Lower leg skin (tissue), 4 donors: ENCODE measurements at regions of chr5 and their contacts with region 1.

Region 1: GRCh38 chr5:81851481-81852178 is 100.7 kb upstream of the SSBP2 start:
- DNase-seq: peak; percentile 96 to 99
- H3K4me3 ChIP-seq: peak overlapping the region; percentile 39
- CTCF ChIP-seq: no peak
- POLR2A ChIP-seq: no peak

Region 2: GRCh38 chr5:81751009-81751835 is 100.4 kb before region 1 on chr5 and contains the start of gene SSBP2:
- intact Hi-C with region 1: loop called (anchors 5 kb)
- DNase-seq: peak; percentile 99 to 100
- H3K4me3 ChIP-seq: peak within 1 kb of the TSS; percentile 74
- CTCF ChIP-seq: no peak
- POLR2A ChIP-seq: no peak
- total RNA-seq, gene SSBP2: 45.3 to 83.1 (median 61.7) TPM

Region 3: GRCh38 chr5:81787474-81788242 is 64.0 kb before region 1 on chr5:
- intact Hi-C with region 1: loop called (anchors 10 kb)
- DNase-seq: peak; percentile 85 to 92
- H3K4me3 ChIP-seq: no peak overlapping the region
- CTCF ChIP-seq: no peak
- POLR2A ChIP-seq: no peak

Region 4: GRCh38 chr5:81909677-81910076 is 58.0 kb after region 1 on chr5:
- intact Hi-C with region 1: no loop called
- DNase-seq: no peak
- H3K4me3 ChIP-seq: no peak overlapping the region
- CTCF ChIP-seq: no peak
- POLR2A ChIP-seq: no peak

Region 5: DNA sequence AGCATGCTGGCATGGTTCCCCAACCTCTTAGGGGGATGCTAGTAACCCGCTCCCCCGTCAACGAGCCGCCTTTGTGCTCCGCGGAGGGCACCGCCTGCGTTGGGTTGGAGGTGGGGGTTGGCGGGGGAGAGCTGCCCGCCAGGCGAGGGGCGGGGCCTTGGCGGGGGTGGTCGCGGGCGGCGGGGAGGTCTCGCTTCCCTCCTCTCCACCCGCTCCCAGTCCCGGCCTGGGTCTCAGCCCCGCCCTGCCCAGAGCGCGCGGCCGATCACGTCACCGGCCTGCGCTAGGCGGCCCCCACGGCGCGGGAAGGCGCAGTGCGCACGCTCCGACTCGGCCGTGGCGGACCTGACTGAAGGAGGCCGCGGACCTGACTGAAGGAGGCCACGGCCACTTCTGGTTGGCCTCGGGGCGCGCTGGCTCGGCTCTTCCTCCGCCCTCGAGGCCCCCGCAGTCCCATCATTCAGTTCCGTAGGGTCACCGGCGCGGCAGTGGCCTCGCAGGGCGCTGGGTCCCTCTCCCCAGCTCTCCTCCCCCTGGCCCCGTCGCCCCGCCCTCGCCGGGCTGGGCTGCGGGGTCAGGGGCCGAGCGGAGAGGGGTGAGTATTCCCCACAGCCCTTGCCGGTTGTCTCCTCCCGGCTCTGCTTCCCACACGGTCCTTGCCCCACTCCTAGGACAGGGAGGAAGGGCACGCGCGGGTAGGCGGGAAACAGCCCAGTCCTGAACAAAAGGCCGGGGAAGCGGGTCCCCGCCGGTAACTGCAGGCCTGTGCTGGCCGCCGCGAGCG is 120.3 kb after region 1 on chr5 and contains the start of gene ATG10:
- intact Hi-C with region 1: loop called (anchors 10 kb)
- DNase-seq: peak; percentile 81 to 97
- H3K4me3 ChIP-seq: peak within 1 kb of the TSS; percentile 72
- CTCF ChIP-seq: no peak
- POLR2A ChIP-seq: peak in 1 of 2 donors; percentile 90
- total RNA-seq, gene ATG10: 4.8 to 13.7 (median 8.4) TPM

Region 6: DNA sequence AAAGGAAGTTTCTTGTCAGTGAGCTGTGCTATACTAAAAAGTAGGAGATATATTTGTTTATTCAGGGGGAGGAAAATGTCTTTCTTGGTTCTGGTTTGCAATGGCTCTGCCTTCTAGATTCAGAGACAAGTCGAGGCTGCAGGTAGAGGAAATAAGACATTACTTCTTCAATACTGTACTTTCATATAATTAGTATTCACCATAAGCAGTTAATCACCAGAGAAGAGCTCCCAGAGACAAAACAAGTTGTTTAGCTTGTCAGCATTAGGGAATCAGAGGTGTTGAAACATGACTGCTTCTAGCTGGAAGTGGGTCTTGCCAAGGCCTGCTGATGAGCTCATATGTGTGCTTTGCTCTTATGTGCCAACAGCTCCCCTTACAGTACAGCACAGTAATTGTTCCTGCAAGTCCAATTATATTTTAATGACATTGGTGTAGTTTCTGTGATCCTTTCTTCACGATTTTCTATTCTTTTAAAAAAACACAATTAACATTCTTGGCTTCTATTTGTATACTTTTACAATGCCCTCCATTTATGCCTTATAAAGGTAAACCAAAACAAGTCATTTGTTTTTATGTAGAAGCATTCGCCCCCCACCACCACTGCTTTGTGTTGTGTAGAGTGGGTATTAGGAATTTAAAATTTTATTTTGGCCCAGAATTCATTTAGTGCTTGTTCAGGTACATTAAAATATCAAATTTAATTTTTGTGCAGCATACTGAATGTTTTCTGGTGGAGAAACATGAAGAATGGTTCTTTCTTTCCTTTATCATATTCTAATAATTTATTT is 314.3 kb after region 1 on chr5:
- intact Hi-C with region 1: loop called (anchors 10 kb)
- DNase-seq: peak; percentile 84 to 89
- H3K4me3 ChIP-seq: no peak overlapping the region
- CTCF ChIP-seq: no peak
- POLR2A ChIP-seq: no peak

Region 7: GRCh38 chr5:82952326-82952725 is 1100.7 kb after region 1 on chr5:
- intact Hi-C with region 1: no loop called
- DNase-seq: no peak
- H3K4me3 ChIP-seq: no peak overlapping the region
- CTCF ChIP-seq: no peak
- POLR2A ChIP-seq: no peak